GM12878 (cell line): ENCODE measurements at regions of chrX and their contacts with region 1.

Region 1: GRCh38 chrX:7088968-7089615 is 58.4 kb upstream of the STS start:
- DNase-seq: no peak
- ATAC-seq: peak; percentile 57
- H3K4me3 ChIP-seq: no peak overlapping the region
- H3K27ac ChIP-seq: peak overlapping the region; percentile 42; the same call in 1 of the 2 replicates
- H3K4me1 ChIP-seq: peaks cover 48% of the 10 kb centered on the region
- H3K27me3 ChIP-seq: no peaks in the 10 kb centered on the region
- CTCF ChIP-seq: peak; percentile 51 to 61 (median 59)
- EP300 ChIP-seq: no peak
- POLR2A ChIP-seq: no peak
- RAD21 ChIP-seq: peak; percentile 78

Region 2: DNA sequence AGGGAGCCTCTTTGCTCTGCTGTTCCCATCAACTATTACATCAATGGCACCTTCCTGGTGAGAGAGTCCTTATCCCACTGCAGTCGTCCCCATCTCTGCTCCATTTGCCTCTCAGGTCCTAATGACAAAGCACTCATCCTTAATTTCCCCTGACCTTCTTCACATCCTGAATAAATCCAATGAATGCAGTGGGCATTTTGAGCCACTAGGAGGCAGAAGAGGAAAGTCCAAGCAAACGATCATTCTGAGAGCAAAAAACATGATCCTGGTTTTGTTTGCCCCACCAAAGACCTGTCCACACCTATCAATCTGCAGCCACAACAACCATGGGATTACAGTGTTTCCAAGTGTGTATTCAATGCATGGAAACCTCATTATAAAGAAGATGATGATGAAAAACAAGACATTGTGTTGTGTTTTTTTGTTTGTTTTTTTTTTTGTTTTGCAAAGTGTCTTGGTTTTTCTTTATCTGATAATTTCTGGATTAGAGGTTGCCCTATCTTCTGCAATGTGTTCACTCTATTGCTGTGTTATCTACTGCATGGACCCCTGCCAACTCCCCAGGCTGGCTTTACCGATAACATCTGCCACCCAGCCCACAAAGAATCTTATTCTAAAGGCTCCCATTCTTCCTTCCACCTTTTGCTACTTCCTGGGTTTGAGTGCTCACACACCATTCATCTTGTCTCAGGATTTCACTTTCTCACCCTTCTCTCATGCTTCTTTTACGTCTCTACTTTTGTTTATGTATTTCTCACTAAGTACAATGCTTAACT is 1067.6 kb before region 1 on chrX:
- CTCF ChIA-PET with region 1: interaction called, 3 read pairs
- POLR2A ChIA-PET with region 1: no interaction called
- RAD21 ChIA-PET with region 1: no interaction called
- SMC1A ChIA-PET with region 1: interaction called, 3 read pairs
- in situ Hi-C with region 1: loop called (anchors 5 kb)
- intact Hi-C with region 1: loop called (anchors 1 kb)
- DNase-seq: no peak
- ATAC-seq: peak; percentile 69
- H3K4me3 ChIP-seq: no peak overlapping the region
- H3K27ac ChIP-seq: no peak overlapping the region
- H3K4me1 ChIP-seq: no peaks in the 10 kb centered on the region
- H3K27me3 ChIP-seq: no peaks in the 10 kb centered on the region
- CTCF ChIP-seq: peak; percentile 69 to 79 (median 79)
- EP300 ChIP-seq: no peak
- POLR2A ChIP-seq: no peak
- RAD21 ChIP-seq: peak; percentile 95

Region 3: DNA sequence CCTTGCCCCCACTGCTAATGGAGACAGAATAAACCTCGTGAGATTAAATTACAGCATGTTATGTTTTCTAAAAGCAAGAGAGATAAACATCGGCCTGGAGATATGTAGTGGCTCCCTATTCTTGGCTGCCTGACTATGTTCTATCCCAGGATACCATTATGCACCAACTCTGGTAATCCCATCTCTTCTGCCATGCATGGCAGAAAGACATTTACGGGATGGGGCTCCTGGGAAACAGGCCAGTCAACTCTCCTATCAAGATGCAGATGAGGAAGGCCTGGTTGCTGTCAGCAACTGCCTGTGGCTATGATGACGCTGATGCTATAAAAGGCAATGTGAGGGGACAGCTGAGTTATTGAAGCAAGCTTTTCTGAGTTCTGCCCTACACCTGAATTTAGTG is 388.0 kb before region 1 on chrX:
- CTCF ChIA-PET with region 1: no interaction called
- POLR2A ChIA-PET with region 1: no interaction called
- RAD21 ChIA-PET with region 1: no interaction called
- SMC1A ChIA-PET with region 1: no interaction called
- in situ Hi-C with region 1: no loop called
- intact Hi-C with region 1: no loop called
- DNase-seq: no peak
- ATAC-seq: no peak
- H3K4me3 ChIP-seq: no peak overlapping the region
- H3K27ac ChIP-seq: no peak overlapping the region
- H3K4me1 ChIP-seq: no peaks in the 10 kb centered on the region
- H3K27me3 ChIP-seq: no peaks in the 10 kb centered on the region
- CTCF ChIP-seq: no peak
- EP300 ChIP-seq: no peak
- POLR2A ChIP-seq: no peak
- RAD21 ChIP-seq: no peak

Region 4: GRCh38 chrX:7019545-7019944 is 69.5 kb before region 1 on chrX:
- CTCF ChIA-PET with region 1: no interaction called
- POLR2A ChIA-PET with region 1: no interaction called
- RAD21 ChIA-PET with region 1: no interaction called
- SMC1A ChIA-PET with region 1: no interaction called
- in situ Hi-C with region 1: no loop called
- intact Hi-C with region 1: no loop called
- DNase-seq: no peak
- ATAC-seq: no peak
- H3K4me3 ChIP-seq: no peak overlapping the region
- H3K27ac ChIP-seq: no peak overlapping the region
- H3K4me1 ChIP-seq: no peaks in the 10 kb centered on the region
- H3K27me3 ChIP-seq: no peaks in the 10 kb centered on the region
- CTCF ChIP-seq: no peak
- EP300 ChIP-seq: no peak
- POLR2A ChIP-seq: no peak
- RAD21 ChIP-seq: no peak

Region 5: GRCh38 chrX:7100022-7100421 is 10.9 kb after region 1 on chrX:
- CTCF ChIA-PET with region 1: interaction called, 8 read pairs
- POLR2A ChIA-PET with region 1: interaction called, 3 read pairs
- RAD21 ChIA-PET with region 1: interaction called, 5 read pairs
- SMC1A ChIA-PET with region 1: interaction called, 10 read pairs
- in situ Hi-C with region 1: no loop called
- intact Hi-C with region 1: no loop called
- DNase-seq: no peak
- ATAC-seq: no peak
- H3K4me3 ChIP-seq: no peak overlapping the region
- H3K27ac ChIP-seq: no peak overlapping the region
- H3K4me1 ChIP-seq: peaks cover 6% of the 10 kb centered on the region; the same call in 1 of the 2 replicates
- H3K27me3 ChIP-seq: no peaks in the 10 kb centered on the region
- CTCF ChIP-seq: no peak
- EP300 ChIP-seq: no peak
- POLR2A ChIP-seq: no peak
- RAD21 ChIP-seq: no peak